ENCODE measurements at regions of chr15 and their contacts with region 1.

Region 1: DNA sequence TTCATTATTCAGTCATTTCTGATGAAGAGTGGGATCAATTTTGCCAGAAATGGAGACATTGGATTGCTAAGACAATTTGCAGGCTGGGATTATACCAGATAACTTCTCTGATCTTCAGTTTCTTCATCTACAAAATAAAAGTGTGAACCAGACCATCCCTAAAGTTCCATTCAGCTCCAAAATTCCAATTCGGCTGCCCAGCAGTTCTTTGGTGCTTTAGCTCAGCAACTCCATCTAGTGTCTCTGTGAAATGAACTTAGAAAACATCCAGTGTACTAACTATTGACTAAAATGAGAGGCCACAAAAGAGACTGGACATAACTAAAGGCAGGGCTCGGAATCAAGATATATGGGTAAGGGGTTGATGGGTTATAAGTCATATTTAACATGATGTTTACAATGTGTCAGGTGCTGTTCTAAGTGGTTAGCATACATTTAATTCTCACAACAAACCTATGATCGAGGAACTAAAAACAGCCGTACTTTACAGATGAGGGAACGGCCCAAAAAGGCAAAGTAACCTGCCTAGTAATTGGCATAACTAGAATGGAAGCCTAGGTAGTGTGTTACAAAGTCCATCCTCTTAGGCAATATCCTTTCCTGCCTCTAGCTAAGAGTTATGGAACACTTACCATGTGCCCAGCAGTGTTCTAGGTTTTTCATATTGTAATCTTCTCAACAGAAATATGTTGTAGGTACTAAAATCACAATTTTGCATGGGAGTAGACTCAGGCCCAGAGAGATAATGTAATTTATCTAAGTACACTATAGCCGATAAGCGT is 17.0 kb downstream of the THAP10 start:
- DNase-seq: peak; percentile 26
- H3K4me3 ChIP-seq: no peak overlapping the region
- H3K27ac ChIP-seq: no peak overlapping the region
- H3K4me1 ChIP-seq: peaks cover 4% of the 10 kb centered on the region
- H3K27me3 ChIP-seq: no peaks in the 10 kb centered on the region
- CTCF ChIP-seq: peak; percentile 43 to 68

Region 2: GRCh38 chr15:70679919-70680231 is 195.3 kb before region 1 on chr15:
- CTCF ChIA-PET with region 1: no interaction called
- dilution Hi-C with region 1: no loop called
- in situ Hi-C with region 1: no loop called
- intact Hi-C with region 1: loop called (anchors 5 kb)
- DNase-seq: no peak
- H3K4me3 ChIP-seq: no peak overlapping the region
- H3K27ac ChIP-seq: no peak overlapping the region
- H3K4me1 ChIP-seq: no peaks in the 10 kb centered on the region
- H3K27me3 ChIP-seq: no peaks in the 10 kb centered on the region
- CTCF ChIP-seq: no peak

Region 3: GRCh38 chr15:70763120-70763878 is 111.9 kb before region 1 on chr15 and contains the start of gene UACA:
- CTCF ChIA-PET with region 1: no interaction called
- dilution Hi-C with region 1: no loop called
- in situ Hi-C with region 1: no loop called
- intact Hi-C with region 1: loop called (anchors 5 kb)
- DNase-seq: peak; percentile 98
- H3K4me3 ChIP-seq: peak within 1 kb of the TSS; percentile 74 to 94 (median 91)
- H3K27ac ChIP-seq: peak within 1 kb of the TSS; percentile 82
- H3K4me1 ChIP-seq: peaks cover 13% of the 10 kb centered on the region
- H3K27me3 ChIP-seq: no peaks in the 10 kb centered on the region
- CTCF ChIP-seq: no peak
- total RNA-seq, gene UACA: 19.2 to 39.6 TPM

Region 4: GRCh38 chr15:70826634-70827033 is 48.6 kb before region 1 on chr15:
- CTCF ChIA-PET with region 1: interaction called, 6 read pairs
- dilution Hi-C with region 1: no loop called
- in situ Hi-C with region 1: no loop called
- intact Hi-C with region 1: loop called (anchors 1 kb)
- DNase-seq: peak; percentile 91
- H3K4me3 ChIP-seq: no peak overlapping the region
- H3K27ac ChIP-seq: peak overlapping the region; percentile 65
- H3K4me1 ChIP-seq: peaks cover 18% of the 10 kb centered on the region
- H3K27me3 ChIP-seq: no peaks in the 10 kb centered on the region
- CTCF ChIP-seq: no peak

Region 5: GRCh38 chr15:70853821-70854666 is 21.1 kb before region 1 on chr15 and contains the start of gene LARP6:
- CTCF ChIA-PET with region 1: interaction called, 11 read pairs
- dilution Hi-C with region 1: no loop called
- in situ Hi-C with region 1: no loop called
- intact Hi-C with region 1: loop called (anchors 1 kb)
- DNase-seq: peak; percentile 22
- H3K4me3 ChIP-seq: peak within 1 kb of the TSS; percentile 66 to 87 (median 83)
- H3K27ac ChIP-seq: peak within 1 kb of the TSS; percentile 83
- H3K4me1 ChIP-seq: peaks cover 36% of the 10 kb centered on the region
- H3K27me3 ChIP-seq: no peaks in the 10 kb centered on the region
- CTCF ChIP-seq: no peak
- total RNA-seq, gene LARP6: 37.5 to 77.3 TPM

Region 6: GRCh38 chr15:71024657-71025056 is 149.5 kb after region 1 on chr15:
- CTCF ChIA-PET with region 1: no interaction called
- dilution Hi-C with region 1: no loop called
- in situ Hi-C with region 1: no loop called
- intact Hi-C with region 1: no loop called
- DNase-seq: no peak
- H3K4me3 ChIP-seq: no peak overlapping the region
- H3K27ac ChIP-seq: no peak overlapping the region
- H3K4me1 ChIP-seq: no peaks in the 10 kb centered on the region
- H3K27me3 ChIP-seq: no peaks in the 10 kb centered on the region
- CTCF ChIP-seq: no peak